ENCODE measurements at regions of chr2 and their contacts with region 1.

Region 1: DNA sequence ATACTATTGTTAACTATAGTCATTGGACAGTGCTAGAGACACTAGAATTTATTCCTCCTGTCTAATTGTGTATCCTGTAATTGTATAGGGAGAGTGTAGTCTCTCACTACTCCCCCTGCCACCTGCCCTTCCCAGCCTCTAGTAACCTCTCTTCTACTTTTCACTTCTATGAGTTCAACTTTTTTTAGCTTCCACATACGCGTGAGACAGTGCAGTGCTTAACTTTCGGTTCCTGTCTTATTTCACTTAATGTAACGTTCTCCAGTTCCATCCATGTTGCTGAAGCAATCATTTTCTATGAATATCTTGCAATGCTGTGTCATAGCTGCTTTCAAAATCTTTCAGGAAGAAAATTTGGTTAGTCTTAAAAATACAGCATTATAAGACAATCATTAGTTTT is 22.8 kb upstream of the RUFY4 start:
- DNase-seq: peak in 1 of 2 donors; percentile 35
- ATAC-seq: no peak
- H3K4me3 ChIP-seq: no peak overlapping the region
- H3K27ac ChIP-seq: no peak overlapping the region
- H3K4me1 ChIP-seq: no peaks in the 10 kb centered on the region
- H3K27me3 ChIP-seq: no peaks in the 10 kb centered on the region

Region 2: GRCh38 chr2:218063486-218063885 is 17.2 kb after region 1 on chr2:
- intact Hi-C with region 1: loop called in 1 of 2 experiments (anchors 1 kb)
- DNase-seq: peak in 1 of 2 donors; percentile 67
- ATAC-seq: no peak
- H3K4me3 ChIP-seq: no peak overlapping the region
- H3K27ac ChIP-seq: no peak overlapping the region
- H3K4me1 ChIP-seq: no peaks in the 10 kb centered on the region
- H3K27me3 ChIP-seq: no peaks in the 10 kb centered on the region

Measured in aorta (tissue), 5 donors.